ENCODE measurements at regions of chr10 and their contacts with region 1.

Region 1: GRCh38 chr10:71684356-71685173 is 35.0 kb downstream of the C10orf105 start:
- DNase-seq: peak; percentile 54 to 73
- H3K4me3 ChIP-seq: no peak overlapping the region
- H3K4me3 Mint-ChIP-seq: no peak overlapping the region
- H3K27ac Mint-ChIP-seq: no peak overlapping the region
- H3K4me1 ChIP-seq: no peaks in the 10 kb centered on the region
- H3K4me1 Mint-ChIP-seq: no peaks in the 10 kb centered on the region
- H3K27me3 ChIP-seq: no peaks in the 10 kb centered on the region
- H3K27me3 Mint-ChIP-seq: peaks cover 9% of the 10 kb centered on the region
- CTCF ChIP-seq: no peak

Region 2: GRCh38 chr10:71795248-71795647 is 110.7 kb after region 1 on chr10:
- CTCF ChIA-PET with region 1: no interaction called
- POLR2A ChIA-PET with region 1: no interaction called
- intact Hi-C with region 1: no loop called
- DNase-seq: peak in 1 of 2 experiments; percentile 74
- H3K4me3 ChIP-seq: no peak overlapping the region
- H3K4me3 Mint-ChIP-seq: no peak overlapping the region
- H3K27ac Mint-ChIP-seq: no peak overlapping the region
- H3K4me1 ChIP-seq: no peaks in the 10 kb centered on the region
- H3K4me1 Mint-ChIP-seq: no peaks in the 10 kb centered on the region
- H3K27me3 ChIP-seq: no peaks in the 10 kb centered on the region
- H3K27me3 Mint-ChIP-seq: peaks cover 12% of the 10 kb centered on the region
- CTCF ChIP-seq: no peak

Region 3: GRCh38 chr10:71812016-71812912 is 127.7 kb after region 1 on chr10:
- CTCF ChIA-PET with region 1: no interaction called
- POLR2A ChIA-PET with region 1: interaction called, 13 read pairs
- intact Hi-C with region 1: no loop called
- DNase-seq: peak; percentile 74 to 91
- H3K4me3 ChIP-seq: no peak overlapping the region
- H3K4me3 Mint-ChIP-seq: no peak overlapping the region
- H3K27ac Mint-ChIP-seq: no peak overlapping the region
- H3K4me1 ChIP-seq: no peaks in the 10 kb centered on the region
- H3K4me1 Mint-ChIP-seq: peaks cover 7% of the 10 kb centered on the region
- H3K27me3 ChIP-seq: no peaks in the 10 kb centered on the region
- H3K27me3 Mint-ChIP-seq: no peaks in the 10 kb centered on the region
- CTCF ChIP-seq: peak; percentile 98